Dorsolateral prefrontal cortex (tissue), 120 donors: ENCODE measurements at regions of chr21 and their contacts with region 1.

Region 1: GRCh38 chr21:45439161-45439872 is 34.4 kb downstream of the COL18A1 start:
- DNase-seq: peak in 9 of 10 donors; percentile 71 to 87 (median 81)
- H3K4me3 ChIP-seq: peak overlapping the region in 46 of 59 donors; percentile 16 to 57 (median 36)
- H3K27ac ChIP-seq: peak overlapping the region in 33 of 59 donors; percentile 6 to 86 (median 55)
- H3K27me3 ChIP-seq: peaks cover 0 to 11% (median 0%) of the 10 kb centered on the region in 45 donors
- CTCF ChIP-seq: peak; percentile 89 to 100 (median 99)

Region 2: GRCh38 chr21:44939532-44940115 is 499.7 kb before region 1 on chr21 and contains the start of gene SLX9:
- intact Hi-C with region 1: loop called in 1 of 2 experiments (anchors 10 kb)
- DNase-seq: peak in 9 of 10 donors; percentile 51 to 87 (median 67)
- H3K4me3 ChIP-seq: peak within 1 kb of the TSS; percentile 62 to 99 (median 89)
- H3K27ac ChIP-seq: peak within 1 kb of the TSS in 42 of 59 donors; percentile 1 to 90 (median 56)
- H3K27me3 ChIP-seq: no peaks in the 10 kb centered on the region
- CTCF ChIP-seq: peak in 33 of 56 donors; percentile 6 to 57 (median 23)
- total RNA-seq, gene SLX9: 13.4 to 35.4 (median 23.4) TPM

Region 3: DNA sequence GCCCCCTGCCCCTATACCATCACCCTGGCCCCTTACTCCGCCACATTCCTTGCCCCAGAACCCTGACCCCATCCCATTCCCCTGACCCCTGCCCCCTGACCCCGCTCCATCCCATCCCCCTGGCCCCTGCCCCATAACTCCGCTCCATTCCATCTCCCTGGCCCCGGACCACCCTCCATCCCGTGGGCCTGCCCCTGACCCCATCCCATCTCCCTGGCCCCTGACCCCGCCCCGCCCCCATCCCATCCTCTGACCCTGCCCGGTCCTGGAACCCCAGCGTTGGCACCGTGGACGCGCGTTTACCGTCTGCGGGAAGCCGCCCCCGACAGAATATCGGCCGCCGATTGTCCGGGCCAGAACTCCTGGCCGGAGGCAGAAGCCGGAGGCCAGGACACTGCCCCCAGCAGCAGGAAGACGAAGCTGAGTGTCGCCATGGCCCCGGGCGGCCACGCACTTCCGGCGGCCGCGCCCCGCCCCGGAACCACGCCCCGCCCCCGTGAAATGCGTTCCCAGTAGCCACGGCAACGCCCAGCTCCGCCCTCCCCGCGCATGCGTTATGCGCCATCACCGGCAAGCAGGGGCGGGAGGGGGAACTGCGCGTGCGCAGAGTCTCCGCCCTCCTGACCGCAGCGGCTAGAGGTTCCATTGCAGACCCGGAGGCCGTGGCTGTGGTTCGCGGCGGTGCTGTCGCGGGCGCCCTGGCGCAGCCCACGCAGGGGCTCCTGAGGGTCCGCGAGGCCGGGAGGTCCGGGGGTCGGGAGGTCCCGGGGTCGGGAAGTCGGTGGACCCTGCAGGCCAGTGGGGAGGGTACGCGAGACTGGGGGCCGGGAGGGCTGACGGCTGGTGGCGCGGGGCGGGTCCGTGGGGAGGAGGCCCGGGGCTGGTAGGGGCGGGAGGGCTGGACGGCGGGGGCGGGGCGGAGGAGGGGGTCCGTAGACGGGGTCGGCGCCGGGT is 151.6 kb before region 1 on chr21 and contains the start of gene POFUT2:
- intact Hi-C with region 1: loop called (anchors 1 to 2 kb)
- DNase-seq: peak; percentile 91 to 99 (median 94)
- H3K4me3 ChIP-seq: peak within 1 kb of the TSS; percentile 55 to 89 (median 75)
- H3K27ac ChIP-seq: peak within 1 kb of the TSS in 39 of 59 donors; percentile 25 to 90 (median 65)
- H3K27me3 ChIP-seq: no peaks in the 10 kb centered on the region
- CTCF ChIP-seq: peak in 33 of 56 donors; percentile 8 to 50 (median 23)
- total RNA-seq, gene POFUT2: 13.5 to 37.4 (median 20.5) TPM

Region 4: GRCh38 chr21:45363921-45364467 is 75.3 kb before region 1 on chr21:
- intact Hi-C with region 1: loop called in 1 of 2 experiments (anchors 2 kb)
- DNase-seq: peak in 8 of 10 donors; percentile 55 to 82 (median 68)
- H3K4me3 ChIP-seq: peak overlapping the region in 22 of 59 donors; percentile 2 to 54 (median 22)
- H3K27ac ChIP-seq: peak overlapping the region in 54 of 59 donors; percentile 16 to 89 (median 73)
- H3K27me3 ChIP-seq: no peaks in the 10 kb centered on the region
- CTCF ChIP-seq: peak in 3 of 56 donors; percentile 16 to 23 (median 19)

Region 5: GRCh38 chr21:45454926-45455673 is 15.8 kb after region 1 on chr21:
- intact Hi-C with region 1: no loop called
- DNase-seq: peak in 1 of 10 donors; percentile 42
- H3K4me3 ChIP-seq: peak overlapping the region in 55 of 59 donors; percentile 1 to 67 (median 31)
- H3K27ac ChIP-seq: peak overlapping the region in 2 of 59 donors; percentile 36 to 46
- H3K27me3 ChIP-seq: peaks cover 0 to 44% (median 6%) of the 10 kb centered on the region in 45 donors
- CTCF ChIP-seq: no peak

Region 6: GRCh38 chr21:45820171-45821091 is 381.1 kb after region 1 on chr21:
- intact Hi-C with region 1: loop called (anchors 5 to 10 kb)
- DNase-seq: peak; percentile 66 to 92 (median 80)
- H3K4me3 ChIP-seq: no peak overlapping the region
- H3K27ac ChIP-seq: peak overlapping the region in 1 of 59 donors; percentile 36
- H3K27me3 ChIP-seq: no peaks in the 10 kb centered on the region
- CTCF ChIP-seq: peak; percentile 49 to 94 (median 86)